ENCODE measurements at regions of chr3 and their contacts with region 1.

Region 1: GRCh38 chr3:48556793-48557626 is at the start of gene PFKFB4:
- DNase-seq: peak; percentile 100
- H3K4me3 ChIP-seq: peak within 1 kb of the TSS; percentile 39 to 61 (median 58)
- H3K27ac ChIP-seq: peak within 1 kb of the TSS; percentile 72 to 83 (median 74)
- H3K4me1 ChIP-seq: peaks cover 0 to 52% (median 42%) of the 10 kb centered on the region in 4 donors
- H3K27me3 ChIP-seq: no peaks in the 10 kb centered on the region
- CTCF ChIP-seq: peak in 1 of 4 experiments; percentile 13
- EP300 ChIP-seq: no peak
- POLR2A ChIP-seq: no peak
- total RNA-seq, gene PFKFB4: 1.5 to 6.7 (median 2.7) TPM

Region 2: GRCh38 chr3:48400824-48401433 is 156.1 kb before region 1 on chr3:
- intact Hi-C with region 1: loop called (anchors 5 kb)
- DNase-seq: peak; percentile 85
- H3K4me3 ChIP-seq: no peak overlapping the region
- H3K27ac ChIP-seq: peak overlapping the region; percentile 88 to 96 (median 89)
- H3K4me1 ChIP-seq: peaks cover 0 to 28% (median 23%) of the 10 kb centered on the region in 4 donors
- H3K27me3 ChIP-seq: no peaks in the 10 kb centered on the region
- CTCF ChIP-seq: peak; percentile 83 to 96 (median 86)
- EP300 ChIP-seq: no peak
- POLR2A ChIP-seq: no peak

Region 3: GRCh38 chr3:48446425-48447193 is 110.4 kb before region 1 on chr3 and contains the start of gene ATRIP:
- intact Hi-C with region 1: loop called (anchors 5 kb)
- DNase-seq: peak; percentile 95
- H3K4me3 ChIP-seq: peak within 1 kb of the TSS; percentile 48 to 93 (median 84)
- H3K27ac ChIP-seq: peak within 1 kb of the TSS; percentile 88 to 96 (median 93)
- H3K4me1 ChIP-seq: peaks cover 0 to 28% (median 24%) of the 10 kb centered on the region in 4 donors
- H3K27me3 ChIP-seq: no peaks in the 10 kb centered on the region
- CTCF ChIP-seq: no peak
- EP300 ChIP-seq: no peak
- POLR2A ChIP-seq: peak; percentile 74 to 77
- total RNA-seq, gene ATRIP: 3.4 to 9.4 (median 5.2) TPM

Region 4: GRCh38 chr3:48472915-48473616 is 83.9 kb before region 1 on chr3:
- intact Hi-C with region 1: no loop called
- DNase-seq: peak; percentile 96
- H3K4me3 ChIP-seq: peak overlapping the region; percentile 54 to 85 (median 72)
- H3K27ac ChIP-seq: peak overlapping the region; percentile 92 to 98 (median 95)
- H3K4me1 ChIP-seq: peaks cover 0 to 52% (median 48%) of the 10 kb centered on the region in 4 donors
- H3K27me3 ChIP-seq: no peaks in the 10 kb centered on the region
- CTCF ChIP-seq: peak; percentile 29 to 60 (median 42)
- EP300 ChIP-seq: no peak
- POLR2A ChIP-seq: peak; percentile 59 to 70

Region 5: DNA sequence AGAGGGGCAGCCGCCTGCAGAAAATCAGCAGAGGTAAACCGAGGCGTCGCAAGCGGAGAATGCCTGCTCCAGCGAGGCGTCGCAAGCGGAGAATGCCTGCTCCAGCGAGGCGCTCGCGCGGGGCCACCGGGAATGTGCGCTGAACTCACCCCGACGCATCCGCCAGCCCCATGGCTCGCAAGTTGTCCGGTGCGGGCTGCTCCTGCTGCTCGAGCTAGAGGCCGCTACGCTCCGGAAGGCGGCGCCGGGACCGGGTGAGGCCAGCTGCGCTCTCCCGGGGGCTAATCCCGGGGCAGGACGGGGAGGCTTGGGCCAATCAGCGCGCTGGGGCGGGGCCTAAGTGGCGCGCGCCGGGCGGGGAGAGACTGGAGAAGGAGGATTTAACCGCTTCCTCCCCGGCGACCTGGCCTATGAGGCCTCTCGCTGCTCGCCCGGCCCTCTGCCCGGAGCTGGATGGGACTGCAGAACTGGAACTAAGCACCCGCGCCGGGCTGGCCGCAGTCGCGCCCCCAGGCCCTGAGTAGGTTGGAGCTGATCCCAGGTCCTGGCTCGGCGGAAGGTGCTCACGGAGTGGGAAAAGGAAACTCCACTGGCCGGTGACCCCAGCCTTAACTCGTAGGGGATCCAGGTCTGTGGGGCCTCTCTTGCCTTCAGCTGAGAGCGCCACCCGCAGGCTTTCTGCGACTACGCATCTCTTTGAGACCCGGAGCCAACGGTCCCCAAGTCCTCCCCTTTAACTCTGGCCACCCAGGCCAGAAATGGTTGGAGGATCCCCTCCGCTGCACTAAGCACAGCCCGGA is 78.4 kb after region 1 on chr3 and contains the start of gene SLC26A6:
- intact Hi-C with region 1: loop called (anchors 2 kb)
- DNase-seq: peak; percentile 98
- H3K4me3 ChIP-seq: peak within 1 kb of the TSS; percentile 73 to 86 (median 80)
- H3K27ac ChIP-seq: peak within 1 kb of the TSS; percentile 87 to 91 (median 87)
- H3K4me1 ChIP-seq: peaks cover 0 to 26% (median 21%) of the 10 kb centered on the region in 4 donors
- H3K27me3 ChIP-seq: no peaks in the 10 kb centered on the region
- CTCF ChIP-seq: peak; percentile 38 to 58 (median 43)
- EP300 ChIP-seq: no peak
- POLR2A ChIP-seq: no peak
- total RNA-seq, gene SLC26A6: 6.4 to 33.0 (median 17.0) TPM

Measured in sigmoid colon (tissue), 7 donors.